Right cardiac atrium (tissue), 5 donors: ENCODE measurements at regions of chr17 and their contacts with region 1.

Region 1: GRCh38 chr17:79045842-79046196 is 21.9 kb downstream of the C1QTNF1 start:
- DNase-seq: peak; percentile 76 to 91 (median 89)
- ATAC-seq: peak; percentile 61 to 67
- H3K4me3 ChIP-seq: no peak overlapping the region
- H3K27ac ChIP-seq: no peak overlapping the region
- H3K4me1 ChIP-seq: peaks cover 3% of the 10 kb centered on the region
- H3K27me3 ChIP-seq: no peaks in the 10 kb centered on the region

Region 2: GRCh38 chr17:79082311-79083190 is 36.7 kb after region 1 on chr17:
- intact Hi-C with region 1: loop called in 1 of 4 experiments (anchors 5 kb)
- DNase-seq: peak; percentile 55 to 83 (median 74)
- ATAC-seq: peak; percentile 27 to 56
- H3K4me3 ChIP-seq: no peak overlapping the region
- H3K27ac ChIP-seq: no peak overlapping the region
- H3K4me1 ChIP-seq: no peaks in the 10 kb centered on the region
- H3K27me3 ChIP-seq: no peaks in the 10 kb centered on the region

Region 3: DNA sequence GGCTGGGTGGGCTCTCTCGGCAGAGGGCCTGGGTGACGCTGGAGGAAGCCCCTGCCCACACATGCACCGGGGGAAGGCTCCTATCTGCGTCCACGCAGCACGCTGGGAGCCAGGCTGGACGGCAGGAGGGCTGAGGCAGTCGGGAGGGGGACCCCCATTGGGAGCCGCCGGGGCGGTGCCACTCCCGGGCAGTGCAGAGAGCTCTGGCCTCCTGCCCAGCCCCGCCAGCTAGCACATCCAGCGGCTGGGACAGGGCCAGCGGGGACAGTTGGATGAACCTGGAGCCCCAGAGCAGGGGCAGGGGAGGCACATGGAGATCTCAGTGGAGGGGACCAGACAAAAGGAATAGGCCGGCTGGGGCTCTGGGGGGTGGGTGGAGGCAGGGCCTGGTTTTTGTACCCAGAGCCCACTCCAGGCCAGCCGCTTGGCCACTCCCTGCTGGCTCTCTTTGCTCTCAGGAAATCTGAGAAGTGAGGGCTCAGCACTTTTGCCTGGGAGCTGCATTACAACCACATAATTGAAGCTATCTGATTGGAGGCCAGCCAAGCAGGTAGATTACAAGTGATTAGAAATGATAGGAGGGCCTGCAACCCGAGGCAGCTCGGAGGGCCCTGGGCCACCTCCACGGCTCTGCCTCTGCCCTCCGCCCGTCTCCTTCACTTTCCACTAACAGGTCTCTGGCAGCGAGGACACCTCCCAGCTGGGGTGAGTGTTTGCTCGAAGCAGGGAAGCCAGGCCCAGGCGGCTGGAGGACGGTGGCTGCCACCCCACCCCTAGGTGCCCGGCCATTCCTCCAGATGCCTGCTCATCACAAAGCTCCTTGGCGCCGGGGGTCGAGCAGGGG is 68.9 kb after region 1 on chr17:
- intact Hi-C with region 1: no loop called
- DNase-seq: peak; percentile 72 to 89 (median 84)
- ATAC-seq: peak; percentile 72 to 76
- H3K4me3 ChIP-seq: no peak overlapping the region
- H3K27ac ChIP-seq: no peak overlapping the region
- H3K4me1 ChIP-seq: no peaks in the 10 kb centered on the region
- H3K27me3 ChIP-seq: no peaks in the 10 kb centered on the region

Region 4: DNA sequence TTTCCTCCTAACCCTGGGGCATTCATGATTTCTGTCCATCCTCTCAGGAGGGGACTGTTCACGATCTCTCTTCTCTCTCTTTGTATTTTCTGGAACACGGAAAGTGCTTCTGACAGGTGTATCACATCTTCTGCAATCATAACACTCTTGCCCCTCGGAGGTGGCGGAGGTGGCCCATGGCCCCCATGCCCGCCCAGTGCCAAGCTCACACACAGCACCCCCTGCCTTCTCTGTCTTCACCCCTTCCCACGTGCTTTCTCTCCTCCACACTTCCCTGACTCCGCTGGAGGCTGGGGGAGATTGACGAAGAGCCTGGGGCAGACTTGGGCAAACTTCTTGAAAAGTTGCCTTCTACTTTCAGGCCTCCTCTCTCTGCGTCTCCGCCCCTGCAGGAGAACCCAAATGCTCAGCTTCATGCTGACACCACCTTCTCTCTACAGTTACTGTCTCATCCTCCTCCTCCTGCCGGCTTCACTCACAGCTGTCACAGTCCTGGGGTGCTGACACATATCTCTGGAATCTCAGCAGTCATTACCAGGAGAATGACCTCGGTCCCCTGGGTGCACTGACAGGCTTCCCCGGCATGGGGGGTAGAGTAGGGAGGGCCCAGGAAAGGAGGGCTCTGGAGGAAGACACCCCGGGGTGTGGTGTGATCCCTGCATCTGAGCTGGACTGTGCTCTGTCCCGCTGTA is 155.9 kb after region 1 on chr17:
- intact Hi-C with region 1: no loop called
- DNase-seq: no peak
- ATAC-seq: no peak
- H3K4me3 ChIP-seq: no peak overlapping the region
- H3K27ac ChIP-seq: no peak overlapping the region
- H3K4me1 ChIP-seq: no peaks in the 10 kb centered on the region
- H3K27me3 ChIP-seq: no peaks in the 10 kb centered on the region